CD4-positive, alpha-beta memory T cell (primary cell): ENCODE measurements at regions of chr3 and their contacts with region 1.

Region 1: GRCh38 chr3:138915503-138916498 is 31.1 kb downstream of the FOXL2 start:
- DNase-seq: peak; percentile 72 to 79 (median 75)
- H3K4me3 ChIP-seq: peak overlapping the region; percentile 69 to 73
- H3K4me3 Mint-ChIP-seq: peak overlapping the region; percentile 69 to 89 (median 86)
- H3K27ac ChIP-seq: peak overlapping the region; percentile 27
- H3K27ac Mint-ChIP-seq: peak overlapping the region in 6 of 7 donors; percentile 8 to 75 (median 62)
- H3K4me1 ChIP-seq: peaks cover 7% of the 10 kb centered on the region
- H3K4me1 Mint-ChIP-seq: peaks cover 3 to 6% (median 4%) of the 10 kb centered on the region in 4 donors
- H3K27me3 ChIP-seq: no peaks in the 10 kb centered on the region
- H3K27me3 Mint-ChIP-seq: peaks cover 2 to 6% of the 10 kb centered on the region in 2 donors

Region 2: GRCh38 chr3:138594150-138594934 is 321.5 kb before region 1 on chr3 and contains the start of gene CEP70:
- CTCF ChIA-PET with region 1: interaction called, 455 read pairs
- POLR2A ChIA-PET with region 1: interaction called, 38 read pairs
- intact Hi-C with region 1: loop called (anchors 1 kb)
- DNase-seq: peak; percentile 90 to 93 (median 92)
- H3K4me3 ChIP-seq: peak within 1 kb of the TSS; percentile 94 to 99
- H3K4me3 Mint-ChIP-seq: peak within 1 kb of the TSS; percentile 85 to 97 (median 92)
- H3K27ac ChIP-seq: peak within 1 kb of the TSS; percentile 75
- H3K27ac Mint-ChIP-seq: peak within 1 kb of the TSS; percentile 89 to 100 (median 97)
- H3K4me1 ChIP-seq: peaks cover 5% of the 10 kb centered on the region
- H3K4me1 Mint-ChIP-seq: peaks cover 6 to 12% (median 9%) of the 10 kb centered on the region in 4 donors
- H3K27me3 ChIP-seq: no peaks in the 10 kb centered on the region
- H3K27me3 Mint-ChIP-seq: no peaks in the 10 kb centered on the region
- total RNA-seq, gene CEP70: 27.1 to 28.0 TPM

Region 3: DNA sequence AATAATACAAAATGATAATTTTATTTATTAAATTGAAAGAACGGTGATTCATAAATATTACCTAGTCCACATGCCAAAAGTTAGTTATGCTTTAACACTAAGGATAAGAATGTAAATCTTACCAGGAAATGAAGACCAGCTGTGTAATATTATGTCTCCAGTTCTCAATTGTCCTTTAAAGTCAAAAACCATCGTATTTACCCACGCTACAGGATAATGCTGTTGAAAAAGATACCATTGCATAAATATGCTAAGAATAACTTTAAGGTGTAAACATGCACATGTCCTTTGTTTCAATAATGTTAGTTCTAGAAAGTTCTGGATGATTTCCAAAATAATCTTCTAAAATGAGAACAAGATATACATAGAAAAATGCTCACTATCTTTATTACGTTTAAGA is 203.7 kb before region 1 on chr3:
- CTCF ChIA-PET with region 1: interaction called, 739 read pairs
- POLR2A ChIA-PET with region 1: no interaction called
- intact Hi-C with region 1: no loop called
- DNase-seq: no peak
- H3K4me3 ChIP-seq: no peak overlapping the region
- H3K4me3 Mint-ChIP-seq: no peak overlapping the region
- H3K27ac ChIP-seq: no peak overlapping the region
- H3K27ac Mint-ChIP-seq: no peak overlapping the region
- H3K4me1 ChIP-seq: no peaks in the 10 kb centered on the region
- H3K4me1 Mint-ChIP-seq: peaks cover 0 to 2% (median 0%) of the 10 kb centered on the region in 4 donors
- H3K27me3 ChIP-seq: no peaks in the 10 kb centered on the region
- H3K27me3 Mint-ChIP-seq: no peaks in the 10 kb centered on the region

Region 4: DNA sequence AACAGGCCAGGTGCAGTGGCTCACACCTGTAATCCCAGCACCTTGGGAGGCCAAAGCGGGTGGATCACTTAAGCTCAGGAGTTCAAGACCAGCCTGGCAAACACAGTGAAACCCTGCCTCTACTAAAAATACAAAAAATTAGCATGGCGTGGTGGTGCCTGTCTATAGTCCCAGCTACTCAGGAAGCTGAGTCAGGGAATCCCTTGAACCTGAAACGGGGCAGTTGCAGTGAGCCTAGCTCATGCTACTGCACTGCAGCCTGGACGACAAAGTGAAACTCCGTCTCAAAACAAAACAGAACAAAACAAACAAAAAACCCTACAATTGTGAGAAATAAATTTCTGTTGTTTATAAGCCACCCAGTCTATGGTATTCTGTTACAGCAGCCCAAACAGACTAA is 175.7 kb before region 1 on chr3:
- CTCF ChIA-PET with region 1: interaction called, 12 read pairs
- POLR2A ChIA-PET with region 1: no interaction called
- intact Hi-C with region 1: no loop called
- DNase-seq: no peak
- H3K4me3 ChIP-seq: no peak overlapping the region
- H3K4me3 Mint-ChIP-seq: no peak overlapping the region
- H3K27ac ChIP-seq: no peak overlapping the region
- H3K27ac Mint-ChIP-seq: peak overlapping the region in 1 of 7 donors; percentile 35
- H3K4me1 ChIP-seq: no peaks in the 10 kb centered on the region
- H3K4me1 Mint-ChIP-seq: peaks cover 0 to 9% (median 8%) of the 10 kb centered on the region in 4 donors
- H3K27me3 ChIP-seq: no peaks in the 10 kb centered on the region
- H3K27me3 Mint-ChIP-seq: no peaks in the 10 kb centered on the region

Region 5: GRCh38 chr3:138781012-138781470 is 134.8 kb before region 1 on chr3:
- CTCF ChIA-PET with region 1: interaction called, 36 read pairs
- POLR2A ChIA-PET with region 1: interaction called, 5 read pairs
- intact Hi-C with region 1: loop called (anchors 1 kb)
- DNase-seq: peak; percentile 73 to 87 (median 83)
- H3K4me3 ChIP-seq: peak overlapping the region in 1 of 2 donors; percentile 22
- H3K4me3 Mint-ChIP-seq: peak overlapping the region; percentile 46 to 81 (median 70)
- H3K27ac ChIP-seq: peak overlapping the region; percentile 48
- H3K27ac Mint-ChIP-seq: peak overlapping the region; percentile 86 to 94 (median 92)
- H3K4me1 ChIP-seq: peaks cover 22% of the 10 kb centered on the region
- H3K4me1 Mint-ChIP-seq: peaks cover 20 to 46% (median 29%) of the 10 kb centered on the region in 4 donors
- H3K27me3 ChIP-seq: no peaks in the 10 kb centered on the region
- H3K27me3 Mint-ChIP-seq: no peaks in the 10 kb centered on the region

Region 6: GRCh38 chr3:138935848-138936740 is 20.3 kb after region 1 on chr3:
- CTCF ChIA-PET with region 1: interaction called, 272 read pairs
- POLR2A ChIA-PET with region 1: interaction called, 4 read pairs
- intact Hi-C with region 1: no loop called
- DNase-seq: peak; percentile 61 to 71 (median 63)
- H3K4me3 ChIP-seq: peak overlapping the region in 1 of 2 donors; percentile 38
- H3K4me3 Mint-ChIP-seq: peak overlapping the region; percentile 63 to 83 (median 76)
- H3K27ac ChIP-seq: no peak overlapping the region
- H3K27ac Mint-ChIP-seq: peak overlapping the region in 1 of 7 donors; percentile 52
- H3K4me1 ChIP-seq: peaks cover 45% of the 10 kb centered on the region
- H3K4me1 Mint-ChIP-seq: peaks cover 14 to 43% (median 28%) of the 10 kb centered on the region in 4 donors
- H3K27me3 ChIP-seq: peaks cover 47% of the 10 kb centered on the region
- H3K27me3 Mint-ChIP-seq: peaks cover 55 to 67% of the 10 kb centered on the region in 2 donors